ENCODE measurements at regions of chr12 and their contacts with region 1.

Region 1: DNA sequence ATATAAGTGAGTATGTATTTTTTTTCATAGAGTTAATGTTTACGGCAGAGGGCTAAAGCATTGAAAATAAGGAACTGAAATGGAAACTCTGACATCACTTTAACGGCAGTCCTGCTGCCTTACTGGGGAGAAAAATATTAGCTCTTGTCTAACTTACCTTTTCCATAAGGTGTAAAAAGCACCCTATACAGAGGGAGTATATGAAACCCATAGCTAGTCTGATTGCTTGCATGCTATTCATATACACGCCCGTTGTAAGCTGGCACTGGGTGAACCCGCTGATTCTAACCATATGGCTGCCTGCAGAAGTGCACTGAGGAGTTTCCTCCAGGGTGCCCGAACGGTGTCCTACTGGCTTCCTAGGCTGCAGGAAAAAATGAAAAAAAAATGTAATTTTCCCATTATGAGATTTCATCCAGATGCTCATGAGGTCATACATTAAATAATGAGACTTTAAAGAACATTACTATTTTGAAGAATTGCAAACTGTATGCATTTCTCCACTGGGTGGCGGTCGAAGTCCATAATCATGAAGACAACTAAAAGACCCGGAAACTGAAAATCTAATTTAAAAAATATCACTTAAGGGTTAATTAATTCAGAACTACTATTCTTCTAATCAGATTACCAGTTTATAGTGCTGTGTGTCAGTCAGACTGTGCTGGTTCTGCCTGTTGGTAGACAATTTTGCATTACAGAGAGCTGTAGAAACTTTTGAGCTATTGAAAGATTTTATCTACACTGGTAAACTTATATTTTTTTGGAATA is 144.7 kb downstream of the ALX1 start:
- DNase-seq: peak; percentile 50
- H3K4me3 Mint-ChIP-seq: no peak overlapping the region
- H3K27ac Mint-ChIP-seq: no peak overlapping the region
- H3K4me1 Mint-ChIP-seq: no peaks in the 10 kb centered on the region
- H3K27me3 Mint-ChIP-seq: no peaks in the 10 kb centered on the region
- CTCF ChIP-seq: peak; percentile 31

Region 2: GRCh38 chr12:85413266-85413665 is 11.5 kb before region 1 on chr12:
- CTCF ChIA-PET with region 1: interaction called, 14 read pairs
- POLR2A ChIA-PET with region 1: interaction called, 4 read pairs
- intact Hi-C with region 1: no loop called
- DNase-seq: peak; percentile 38
- H3K4me3 Mint-ChIP-seq: no peak overlapping the region
- H3K27ac Mint-ChIP-seq: no peak overlapping the region
- H3K4me1 Mint-ChIP-seq: no peaks in the 10 kb centered on the region
- H3K27me3 Mint-ChIP-seq: no peaks in the 10 kb centered on the region
- CTCF ChIP-seq: no peak

Region 3: DNA sequence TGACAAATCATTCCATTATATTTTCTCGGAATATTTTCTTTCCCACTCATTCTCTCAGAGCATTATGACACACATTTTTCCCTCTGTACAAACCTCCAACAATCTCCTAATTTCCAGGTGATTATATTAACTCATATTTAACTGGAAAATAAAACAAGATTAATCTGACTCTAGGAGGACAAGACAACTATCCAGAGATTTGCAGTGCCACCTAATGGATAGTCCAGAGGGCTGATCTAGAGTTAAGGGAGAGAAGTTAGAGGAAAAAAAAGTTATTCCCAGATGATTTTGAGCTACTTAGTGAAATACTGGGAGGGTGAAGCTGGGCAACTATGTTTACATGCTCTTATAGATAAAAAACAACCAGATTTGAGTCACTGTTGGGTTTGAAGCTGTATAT is 17.0 kb after region 1 on chr12:
- CTCF ChIA-PET with region 1: interaction called, 42 read pairs
- POLR2A ChIA-PET with region 1: interaction called, 3 read pairs
- intact Hi-C with region 1: no loop called
- DNase-seq: peak; percentile 40
- H3K4me3 Mint-ChIP-seq: no peak overlapping the region
- H3K27ac Mint-ChIP-seq: no peak overlapping the region
- H3K4me1 Mint-ChIP-seq: no peaks in the 10 kb centered on the region
- H3K27me3 Mint-ChIP-seq: no peaks in the 10 kb centered on the region
- CTCF ChIP-seq: peak; percentile 21

Region 4: DNA sequence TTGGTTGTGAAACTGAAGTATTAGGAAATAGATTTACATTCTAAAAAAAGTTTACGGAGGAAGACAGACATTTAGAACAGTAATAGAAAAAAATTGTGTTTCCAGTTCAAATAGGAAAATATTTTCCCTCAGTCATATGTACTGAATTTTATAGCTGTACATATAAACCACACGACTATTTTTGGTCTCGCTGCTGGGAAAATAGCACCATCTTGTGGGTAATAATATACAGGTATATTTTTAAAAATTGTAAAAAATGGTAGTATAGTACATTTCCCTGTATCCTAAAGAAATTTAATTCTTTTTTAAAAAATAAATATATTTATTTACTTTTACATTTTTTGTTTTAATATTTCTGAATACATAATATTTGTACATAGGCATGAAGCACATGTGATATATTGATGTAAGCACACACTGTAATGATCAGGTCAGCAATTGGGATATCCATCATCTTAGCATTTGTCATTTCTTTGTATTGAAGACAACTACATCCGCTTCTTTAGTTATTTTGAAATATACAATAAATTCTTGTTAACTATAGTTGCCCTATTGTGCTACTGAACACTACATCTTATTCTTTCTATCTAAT is 23.9 kb after region 1 on chr12:
- CTCF ChIA-PET with region 1: interaction called, 42 read pairs
- POLR2A ChIA-PET with region 1: no interaction called
- intact Hi-C with region 1: no loop called
- DNase-seq: peak; percentile 32
- H3K4me3 Mint-ChIP-seq: no peak overlapping the region
- H3K27ac Mint-ChIP-seq: no peak overlapping the region
- H3K4me1 Mint-ChIP-seq: peaks cover 6% of the 10 kb centered on the region
- H3K27me3 Mint-ChIP-seq: no peaks in the 10 kb centered on the region
- CTCF ChIP-seq: peak; percentile 43

Region 5: GRCh38 chr12:85920324-85920947 is 495.7 kb after region 1 on chr12:
- CTCF ChIA-PET with region 1: interaction called, 8 read pairs
- POLR2A ChIA-PET with region 1: no interaction called
- intact Hi-C with region 1: loop called (anchors 2 kb)
- DNase-seq: peak; percentile 39
- H3K4me3 Mint-ChIP-seq: no peak overlapping the region
- H3K27ac Mint-ChIP-seq: no peak overlapping the region
- H3K4me1 Mint-ChIP-seq: no peaks in the 10 kb centered on the region
- H3K27me3 Mint-ChIP-seq: no peaks in the 10 kb centered on the region
- CTCF ChIP-seq: peak; percentile 50

Measured in MCF 10A (cell line).